ENCODE measurements at regions of chr10 and their contacts with region 1.

Region 1: DNA sequence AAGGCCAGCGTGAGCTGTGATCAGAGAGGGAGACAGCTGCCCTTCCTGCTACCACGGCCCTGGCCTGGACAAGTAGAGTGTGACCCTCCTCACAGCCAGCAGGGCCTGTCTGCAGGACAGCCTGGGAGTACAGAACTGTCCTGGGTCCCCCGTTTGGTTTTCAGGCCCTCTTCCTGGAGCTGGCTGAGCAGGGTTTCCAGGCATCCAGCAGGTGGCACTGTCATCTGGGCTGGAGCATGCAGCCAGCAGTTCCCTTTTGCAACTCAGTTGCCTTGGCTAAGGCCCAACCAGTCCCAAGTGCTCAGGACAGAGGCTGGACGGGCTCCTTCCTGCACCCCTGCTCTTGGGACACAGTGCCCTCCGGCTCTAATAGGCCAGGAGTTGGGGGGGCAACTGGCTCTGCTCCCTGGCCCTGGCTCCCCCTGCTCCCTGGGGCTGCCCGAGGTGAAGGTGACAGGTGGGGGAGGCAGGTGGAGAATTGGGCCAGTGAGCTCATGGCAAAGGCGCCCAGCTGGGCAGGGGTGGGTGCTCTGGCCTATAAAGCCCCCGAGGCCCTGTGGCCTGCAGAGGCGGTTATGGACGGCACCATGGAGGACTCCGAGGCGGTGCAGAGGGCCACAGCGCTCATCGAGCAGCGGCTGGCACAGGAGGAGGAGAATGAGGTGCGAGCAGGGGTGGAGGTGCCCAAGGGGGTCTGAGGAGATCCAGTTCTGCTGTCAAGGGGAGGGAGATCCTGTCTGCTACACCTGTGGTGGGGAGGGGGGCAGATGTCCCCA is at the start of gene ANKRD2:
- DNase-seq: peak in 1 of 2 donors; percentile 90
- H3K4me3 ChIP-seq: no peak within 1 kb of the TSS
- H3K27ac ChIP-seq: peak within 1 kb of the TSS; percentile 16 to 76
- H3K4me1 ChIP-seq: peaks cover 10 to 14% of the 10 kb centered on the region in 2 donors
- H3K27me3 ChIP-seq: no peaks in the 10 kb centered on the region
- CTCF ChIP-seq: peak; percentile 86 to 97 (median 87)
- total RNA-seq, gene ANKRD2: not detected

Region 2: DNA sequence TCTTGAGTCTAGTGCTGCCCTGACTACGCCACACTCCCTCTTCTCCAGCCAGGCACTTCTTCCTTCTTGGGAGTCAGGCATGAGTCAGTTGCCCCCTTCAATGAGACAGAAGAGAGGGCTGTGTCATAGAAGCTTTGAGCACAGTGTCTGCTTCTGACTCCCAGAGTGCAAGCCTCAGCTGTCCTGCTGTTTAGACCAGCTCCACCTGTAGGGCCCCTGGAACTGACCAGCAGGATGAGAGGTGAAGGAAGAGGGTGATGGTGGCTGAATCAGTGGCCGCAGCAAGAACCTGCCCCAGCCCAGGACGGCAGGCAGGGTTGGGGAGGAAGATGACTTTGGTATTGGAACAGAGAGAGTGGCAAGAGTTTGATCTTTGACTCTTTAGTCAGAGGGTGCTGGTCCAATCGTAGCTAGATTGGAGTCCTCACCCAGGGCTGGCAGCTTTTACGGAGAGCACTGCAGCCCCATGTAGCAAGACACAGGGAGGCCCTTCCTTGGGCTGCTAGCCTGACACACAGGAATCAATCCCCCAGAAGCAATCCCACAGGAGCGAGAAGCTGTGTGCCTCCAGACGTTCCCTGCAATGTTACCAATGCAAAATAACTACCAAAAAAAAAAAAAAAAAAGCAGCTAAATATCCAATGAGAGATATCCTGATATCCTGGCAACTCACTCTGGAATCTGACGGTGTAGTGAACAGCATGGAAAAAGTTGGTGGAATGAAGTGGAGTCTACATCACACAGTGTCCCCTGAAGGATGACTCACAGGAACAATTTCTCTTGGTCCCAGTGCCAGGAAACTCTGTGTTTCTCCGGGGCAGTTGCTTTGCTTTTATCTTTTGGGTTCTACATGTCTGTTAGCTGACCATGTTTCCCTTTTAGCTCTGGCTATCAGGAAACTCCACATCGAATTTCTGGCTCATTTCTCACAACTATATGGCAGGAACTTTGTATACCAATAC is 24.0 kb after region 1 on chr10:
- intact Hi-C with region 1: loop called (anchors 1 kb)
- DNase-seq: peak; percentile 56 to 95
- H3K4me3 ChIP-seq: no peak overlapping the region
- H3K27ac ChIP-seq: peak overlapping the region; percentile 88 to 99
- H3K4me1 ChIP-seq: peaks cover 9 to 49% of the 10 kb centered on the region in 2 donors
- H3K27me3 ChIP-seq: no peaks in the 10 kb centered on the region
- CTCF ChIP-seq: no peak

Region 3: DNA sequence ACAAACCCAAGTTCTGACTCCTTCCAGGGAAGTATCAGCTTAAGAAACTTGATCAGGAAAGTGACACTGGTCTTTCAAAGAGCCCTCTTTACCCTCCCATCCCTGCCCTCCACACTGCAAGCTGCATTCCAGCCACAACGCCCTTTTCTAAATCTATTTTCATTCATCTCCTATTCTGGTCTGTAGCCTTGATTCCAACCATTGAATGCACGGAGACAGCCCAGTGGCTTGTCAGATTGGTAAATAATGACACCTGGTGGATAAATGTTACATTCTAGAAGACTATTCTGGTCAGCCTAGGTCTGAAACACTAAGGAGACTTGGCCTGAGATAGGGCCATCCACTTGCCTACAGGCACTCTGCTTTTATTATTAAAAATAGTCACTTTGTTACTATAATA is 40.0 kb after region 1 on chr10:
- intact Hi-C with region 1: loop called (anchors 1 kb)
- DNase-seq: no peak
- H3K4me3 ChIP-seq: no peak overlapping the region
- H3K27ac ChIP-seq: peak overlapping the region in 1 of 2 donors; percentile 44
- H3K4me1 ChIP-seq: peaks cover 0 to 24% of the 10 kb centered on the region in 2 donors
- H3K27me3 ChIP-seq: no peaks in the 10 kb centered on the region
- CTCF ChIP-seq: peak; percentile 41 to 75 (median 62)

Region 4: GRCh38 chr10:97640174-97640867 is 67.9 kb after region 1 on chr10 and contains the start of gene PI4K2A:
- intact Hi-C with region 1: loop called (anchors 1 kb)
- DNase-seq: peak; percentile 97 to 99
- H3K4me3 ChIP-seq: peak within 1 kb of the TSS; percentile 87 to 96
- H3K27ac ChIP-seq: peak within 1 kb of the TSS; percentile 80 to 93
- H3K4me1 ChIP-seq: peaks cover 0 to 13% of the 10 kb centered on the region in 2 donors
- H3K27me3 ChIP-seq: no peaks in the 10 kb centered on the region
- CTCF ChIP-seq: no peak
- total RNA-seq, gene PI4K2A: 33.7 TPM

Region 5: GRCh38 chr10:97999066-97999922 is 426.9 kb after region 1 on chr10:
- intact Hi-C with region 1: no loop called
- DNase-seq: no peak
- H3K4me3 ChIP-seq: no peak overlapping the region
- H3K27ac ChIP-seq: no peak overlapping the region
- H3K4me1 ChIP-seq: no peaks in the 10 kb centered on the region
- H3K27me3 ChIP-seq: no peaks in the 10 kb centered on the region
- CTCF ChIP-seq: no peak